Activated CD4-positive, alpha-beta T cell treated with anti-CD3 and anti-CD28 coated beads, Interleukin-2, amount 10 ng/mL, durations not matched to agents 7 days and 5 days (primary cell): ENCODE measurements at regions of chr15 and their contacts with region 1.

Region 1: DNA sequence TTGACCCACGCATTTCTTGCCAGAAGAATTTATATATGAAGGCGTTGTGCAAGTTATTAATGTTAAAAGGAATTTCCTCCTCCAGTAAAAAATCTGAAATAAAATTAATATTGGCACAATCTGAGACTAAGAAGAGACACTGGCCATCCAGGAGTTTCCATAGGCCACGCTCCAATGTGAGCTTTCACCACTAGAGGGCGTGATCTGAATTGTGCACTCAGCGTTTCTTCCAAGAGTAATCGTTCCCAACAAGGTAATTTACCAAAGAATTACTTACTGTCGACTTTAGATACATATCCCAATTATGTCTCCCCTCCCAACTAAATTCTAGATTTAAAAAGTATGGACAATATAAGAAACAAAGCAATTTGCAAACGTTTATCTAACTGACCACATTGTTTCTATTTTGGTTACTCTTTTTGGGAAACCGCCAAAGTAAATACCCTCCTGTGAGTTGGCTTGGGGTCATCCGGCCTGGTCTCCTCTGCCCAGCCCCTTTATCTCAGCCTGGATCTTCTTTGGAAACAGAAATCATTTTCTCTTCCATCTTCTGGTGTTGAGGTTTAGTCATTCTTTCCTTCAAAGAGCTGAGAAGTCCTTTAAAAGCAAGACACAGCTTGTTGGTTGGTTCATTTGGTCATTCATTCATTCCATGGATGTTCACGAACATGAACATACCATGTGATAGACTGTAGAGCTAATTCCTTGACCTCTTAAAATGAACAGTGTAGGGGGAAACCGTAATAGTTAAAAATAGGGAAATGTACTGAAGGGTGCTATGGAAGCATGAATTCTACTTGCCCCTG is 26.2 kb downstream of the POLR2M start:
- DNase-seq: peak; percentile 60
- H3K4me3 Mint-ChIP-seq: no peak overlapping the region
- H3K27ac Mint-ChIP-seq: no peak overlapping the region
- H3K4me1 Mint-ChIP-seq: peaks cover 6% of the 10 kb centered on the region
- H3K27me3 Mint-ChIP-seq: no peaks in the 10 kb centered on the region

Region 2: DNA sequence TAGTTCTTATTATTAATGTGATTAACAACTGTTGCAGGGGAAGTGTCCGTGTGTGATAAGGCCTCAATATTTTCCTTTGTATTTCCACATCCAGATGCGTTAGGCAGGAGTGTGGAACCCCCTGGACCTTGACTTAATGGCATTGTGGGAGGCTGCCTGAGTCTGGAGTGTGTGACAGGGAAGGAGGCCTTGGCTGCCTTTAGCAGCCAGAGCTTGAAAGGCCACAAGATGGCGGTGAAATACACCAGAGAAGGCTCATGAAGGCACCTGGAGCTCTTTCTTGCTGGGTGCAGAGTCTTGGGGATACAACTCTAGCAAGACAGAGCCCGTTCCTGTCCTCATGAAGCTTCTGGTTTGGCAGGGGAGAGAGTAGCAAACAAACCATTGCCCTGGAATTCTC is 10.7 kb after region 1 on chr15:
- CTCF ChIA-PET with region 1: interaction called, 11 read pairs
- POLR2A ChIA-PET with region 1: interaction called, 3 read pairs
- DNase-seq: peak; percentile 13
- H3K4me3 Mint-ChIP-seq: no peak overlapping the region
- H3K27ac Mint-ChIP-seq: no peak overlapping the region
- H3K4me1 Mint-ChIP-seq: peaks cover 7% of the 10 kb centered on the region
- H3K27me3 Mint-ChIP-seq: peaks cover 3% of the 10 kb centered on the region